Sigmoid colon (tissue), 7 donors: ENCODE measurements at regions of chr16 and their contacts with region 1.

Region 1: DNA sequence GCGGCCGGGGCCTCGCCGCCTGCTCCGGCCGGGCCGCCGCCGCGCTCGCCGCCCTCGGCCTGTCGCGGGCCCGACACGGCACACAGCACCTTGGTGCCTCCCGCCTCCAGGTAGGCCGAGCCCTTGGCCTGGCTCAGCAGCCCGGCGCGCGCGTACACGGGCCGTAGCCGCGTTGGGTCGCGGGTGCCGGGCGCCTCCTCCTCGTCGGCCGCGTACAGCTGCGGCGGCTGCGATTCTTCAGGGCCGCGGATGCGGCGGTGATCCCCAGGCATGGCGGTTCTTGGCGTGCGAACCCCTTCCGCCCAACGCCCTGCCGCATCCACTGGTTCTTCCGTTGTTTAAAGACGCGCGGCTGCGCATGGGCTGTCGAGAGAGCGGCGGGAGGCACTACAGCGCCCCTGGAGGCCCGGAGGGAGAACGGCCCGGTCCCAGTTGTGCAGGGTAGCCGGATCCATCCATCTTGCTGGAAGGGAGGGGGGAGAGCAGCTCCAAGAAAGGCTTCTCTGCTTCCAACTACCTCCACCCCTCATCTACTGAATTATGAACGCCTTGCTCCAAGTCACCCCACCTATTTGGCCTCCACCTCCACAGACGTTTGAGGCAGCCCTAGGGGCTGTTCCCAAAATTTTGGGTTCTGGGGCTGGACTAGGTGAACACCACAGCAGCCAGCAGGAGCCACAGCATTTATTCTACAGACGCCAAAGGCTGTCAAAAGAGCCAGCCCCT is at the start of gene EXOSC6:
- DNase-seq: peak; percentile 94
- H3K4me3 ChIP-seq: peak within 1 kb of the TSS; percentile 66 to 90 (median 80)
- H3K27ac ChIP-seq: peak within 1 kb of the TSS; percentile 85 to 97 (median 91)
- H3K4me1 ChIP-seq: peaks cover 0 to 29% (median 24%) of the 10 kb centered on the region in 4 donors
- H3K27me3 ChIP-seq: no peaks in the 10 kb centered on the region
- CTCF ChIP-seq: peak; percentile 69 to 93 (median 89)
- EP300 ChIP-seq: no peak
- POLR2A ChIP-seq: peak; percentile 69 to 76
- total RNA-seq, gene EXOSC6: 13.5 to 24.7 (median 14.1) TPM

Region 2: DNA sequence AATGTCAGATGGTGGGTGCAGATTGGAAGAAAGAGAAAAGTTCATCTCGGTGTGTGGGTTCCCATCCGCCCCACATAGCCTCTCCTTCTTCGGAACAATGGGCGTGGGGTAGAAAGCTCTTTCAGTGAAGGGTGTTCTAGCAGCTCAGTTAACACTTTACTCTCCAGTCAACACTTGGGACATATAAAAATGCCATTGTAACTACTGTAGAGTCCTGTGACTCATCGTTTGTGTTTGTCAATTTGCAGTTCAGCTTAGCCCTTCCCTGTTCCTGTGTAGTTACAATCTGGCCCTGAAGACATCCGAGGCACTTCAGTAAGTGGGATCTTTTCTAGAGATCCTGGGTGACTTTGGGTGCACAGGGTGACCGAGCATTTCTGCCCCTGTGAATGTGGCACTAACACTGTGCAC is 89.7 kb before region 1 on chr16:
- intact Hi-C with region 1: loop called (anchors 10 kb)
- DNase-seq: no peak
- H3K4me3 ChIP-seq: no peak overlapping the region
- H3K27ac ChIP-seq: no peak overlapping the region
- H3K4me1 ChIP-seq: peaks cover 0 to 8% (median 0%) of the 10 kb centered on the region in 4 donors
- H3K27me3 ChIP-seq: no peaks in the 10 kb centered on the region
- CTCF ChIP-seq: no peak
- EP300 ChIP-seq: no peak
- POLR2A ChIP-seq: no peak